IMR-90 (cell line): ENCODE measurements at regions of chr10 and their contacts with region 1.

Region 1: DNA sequence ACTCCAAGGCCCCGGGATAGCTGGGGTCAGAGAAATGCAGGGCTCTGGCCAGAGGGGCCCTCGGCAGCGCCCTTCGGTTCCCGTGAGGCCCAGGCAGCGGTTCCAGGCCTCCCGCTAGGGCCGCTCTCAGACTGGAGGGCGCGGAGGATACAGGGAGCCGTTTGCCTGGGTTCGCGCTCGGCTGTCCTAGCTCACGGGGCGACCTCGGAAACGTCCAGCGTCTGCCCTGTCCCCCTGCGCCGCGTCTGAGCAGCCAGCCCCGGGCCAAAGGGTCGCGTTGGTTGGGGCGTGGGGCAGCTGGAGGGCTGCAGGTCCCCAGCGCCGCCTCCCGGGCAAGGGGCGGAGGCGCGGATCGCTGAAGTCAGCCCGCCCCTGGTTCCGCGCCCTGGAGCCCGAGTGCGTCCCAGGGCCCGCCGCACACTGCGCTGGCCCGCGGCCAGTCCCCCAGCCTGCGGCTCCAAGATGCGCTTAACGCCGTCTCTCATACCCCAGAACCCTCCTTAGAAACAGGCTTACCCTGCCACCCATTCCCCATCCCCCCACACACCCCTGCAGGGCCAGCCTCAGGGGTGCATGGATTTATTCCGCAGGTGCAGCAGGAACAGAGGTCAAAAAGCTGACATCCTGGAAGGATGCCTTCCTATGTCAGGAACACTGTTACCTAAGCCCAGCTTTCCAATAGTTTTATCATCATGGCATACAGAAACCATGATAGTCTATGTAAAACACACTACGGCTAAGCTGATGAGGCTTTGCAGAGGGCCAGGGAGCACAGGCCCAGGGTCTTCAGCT is 22.1 kb upstream of the OPN4 start:
- DNase-seq: no peak
- ATAC-seq: peak; percentile 58
- H3K4me3 ChIP-seq: no peak overlapping the region; the same call in 1 of the 2 replicates
- H3K27ac ChIP-seq: no peak overlapping the region
- H3K4me1 ChIP-seq: peaks cover 12% of the 10 kb centered on the region
- H3K27me3 ChIP-seq: no peaks in the 10 kb centered on the region; the same call in 1 of the 2 replicates
- CTCF ChIP-seq: no peak
- POLR2A ChIP-seq: no peak
- RAD21 ChIP-seq: no peak; the same call in 1 of the 2 replicates

Region 2: DNA sequence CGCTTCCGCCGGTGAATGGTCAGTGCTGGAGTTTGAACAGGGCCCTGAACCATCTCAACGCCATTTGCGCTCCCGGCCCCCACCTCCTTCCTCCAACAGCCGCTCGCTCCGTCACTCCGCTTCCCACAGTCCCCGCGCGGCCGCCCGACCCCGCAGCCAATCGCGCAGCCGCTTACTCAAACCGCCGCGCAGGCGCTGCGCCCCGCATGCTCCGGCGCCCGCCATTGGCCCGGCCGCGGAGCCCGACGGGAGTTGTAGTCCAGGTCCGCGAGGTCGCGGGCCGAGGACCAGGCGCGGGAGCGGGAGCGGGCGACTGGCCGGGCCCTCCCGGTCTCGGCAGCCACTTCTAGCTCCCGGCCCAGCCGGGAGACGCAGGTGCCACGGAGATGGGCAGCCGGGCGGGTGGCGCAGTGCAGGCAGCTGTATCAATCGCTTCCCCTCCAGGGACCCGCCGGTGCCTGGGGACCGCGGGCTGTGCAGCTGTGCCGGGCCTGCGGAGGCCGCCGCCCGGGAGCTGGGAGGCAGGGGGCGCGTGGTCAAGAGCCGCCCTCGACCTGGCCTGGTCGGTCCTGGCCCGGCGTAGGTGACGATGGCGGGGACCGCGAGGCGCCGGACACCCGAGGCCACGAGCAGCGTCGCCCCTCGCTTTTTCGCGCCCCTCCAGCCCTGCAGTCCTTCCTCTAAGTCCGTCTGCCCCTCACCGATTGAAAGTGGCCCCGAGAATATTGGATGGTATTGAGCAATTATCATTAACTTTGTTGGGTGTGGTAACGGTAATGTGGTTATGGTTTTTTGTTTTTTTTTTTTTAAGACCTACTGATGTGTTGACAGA is 110.3 kb before region 1 on chr10 and contains the start of gene WAPL:
- CTCF ChIA-PET with region 1: no interaction called
- POLR2A ChIA-PET with region 1: interaction called, 13 read pairs
- dilution Hi-C with region 1: no loop called
- in situ Hi-C with region 1: no loop called
- intact Hi-C with region 1: no loop called
- DNase-seq: peak; percentile 90
- ATAC-seq: peak; percentile 98
- H3K4me3 ChIP-seq: peak within 1 kb of the TSS; percentile 68
- H3K27ac ChIP-seq: peak within 1 kb of the TSS; percentile 81
- H3K4me1 ChIP-seq: no peaks in the 10 kb centered on the region; the same call in 1 of the 2 replicates
- H3K27me3 ChIP-seq: no peaks in the 10 kb centered on the region
- CTCF ChIP-seq: no peak
- POLR2A ChIP-seq: no peak
- RAD21 ChIP-seq: no peak
- total RNA-seq, gene WAPL: 31.7 and 49.4 TPM in 2 replicates

Region 3: GRCh38 chr10:86592413-86592812 is 39.8 kb before region 1 on chr10:
- CTCF ChIA-PET with region 1: no interaction called
- POLR2A ChIA-PET with region 1: no interaction called
- dilution Hi-C with region 1: no loop called
- in situ Hi-C with region 1: no loop called
- intact Hi-C with region 1: loop called (anchors 5 kb)
- DNase-seq: no peak
- ATAC-seq: peak; percentile 43; the same call in 1 of the 2 replicates
- H3K4me3 ChIP-seq: no peak overlapping the region
- H3K27ac ChIP-seq: no peak overlapping the region
- H3K4me1 ChIP-seq: no peaks in the 10 kb centered on the region
- H3K27me3 ChIP-seq: no peaks in the 10 kb centered on the region
- CTCF ChIP-seq: 0 out of 2 replicates have a peak, but pooled peaks have one; percentile 15
- POLR2A ChIP-seq: no peak
- RAD21 ChIP-seq: peak; percentile 25; the same call in 1 of the 2 replicates

Region 4: GRCh38 chr10:86668297-86669165 is 36.3 kb after region 1 on chr10 and contains the start of gene LDB3:
- CTCF ChIA-PET with region 1: no interaction called
- POLR2A ChIA-PET with region 1: no interaction called
- dilution Hi-C with region 1: no loop called
- in situ Hi-C with region 1: no loop called
- intact Hi-C with region 1: loop called (anchors 1 kb)
- DNase-seq: peak; percentile 73
- ATAC-seq: peak; percentile 78
- H3K4me3 ChIP-seq: peak within 1 kb of the TSS; percentile 19; the same call in 1 of the 2 replicates
- H3K27ac ChIP-seq: peak within 1 kb of the TSS; percentile 79
- H3K4me1 ChIP-seq: peaks cover 43% of the 10 kb centered on the region
- H3K27me3 ChIP-seq: no peaks in the 10 kb centered on the region
- CTCF ChIP-seq: no peak
- POLR2A ChIP-seq: peak; percentile 30; the same call in 1 of the 2 replicates
- RAD21 ChIP-seq: no peak
- total RNA-seq, gene LDB3: 0.28 and 0.36 TPM in 2 replicates